CD8-positive, alpha-beta T cell (primary cell): ENCODE measurements at regions of chr6 and their contacts with region 1.

Region 1: DNA sequence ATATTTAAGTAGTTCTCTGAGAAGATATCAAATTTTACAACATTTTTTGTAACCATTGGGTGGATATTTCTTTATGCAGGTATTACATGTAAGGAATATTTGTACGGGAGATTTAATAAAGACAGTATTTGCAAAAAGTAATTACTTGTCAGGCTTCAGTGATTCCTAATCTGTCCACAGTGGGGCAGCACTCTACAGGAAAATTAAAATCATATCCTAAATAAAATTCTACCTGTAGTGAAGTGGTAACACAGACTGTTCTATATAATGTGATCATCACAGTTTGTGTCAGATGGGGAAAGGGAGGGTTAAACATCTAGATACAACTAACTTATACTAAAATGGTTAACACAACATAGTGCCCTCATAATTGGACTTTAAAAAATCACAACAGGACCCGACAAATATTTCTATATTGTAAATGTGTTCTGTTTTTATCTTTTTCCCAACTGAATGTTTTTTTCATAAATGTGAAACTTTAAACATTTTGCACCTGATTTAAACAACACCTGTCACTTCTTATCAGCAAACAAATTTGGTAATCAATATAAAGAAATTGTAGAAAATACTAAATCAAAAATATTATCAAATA is 145.6 kb upstream of the MANEA start:
- DNase-seq: peak in 6 of 9 experiments; percentile 4 to 41 (median 32)
- ATAC-seq: no peak
- H3K4me3 ChIP-seq: no peak overlapping the region
- H3K4me3 Mint-ChIP-seq: no peak overlapping the region
- H3K27ac ChIP-seq: no peak overlapping the region
- H3K27ac Mint-ChIP-seq: no peak overlapping the region
- H3K4me1 ChIP-seq: no peaks in the 10 kb centered on the region
- H3K4me1 Mint-ChIP-seq: no peaks in the 10 kb centered on the region
- H3K27me3 ChIP-seq: no peaks in the 10 kb centered on the region
- H3K27me3 Mint-ChIP-seq: no peaks in the 10 kb centered on the region
- CTCF ChIP-seq: peak; percentile 70

Region 2: DNA sequence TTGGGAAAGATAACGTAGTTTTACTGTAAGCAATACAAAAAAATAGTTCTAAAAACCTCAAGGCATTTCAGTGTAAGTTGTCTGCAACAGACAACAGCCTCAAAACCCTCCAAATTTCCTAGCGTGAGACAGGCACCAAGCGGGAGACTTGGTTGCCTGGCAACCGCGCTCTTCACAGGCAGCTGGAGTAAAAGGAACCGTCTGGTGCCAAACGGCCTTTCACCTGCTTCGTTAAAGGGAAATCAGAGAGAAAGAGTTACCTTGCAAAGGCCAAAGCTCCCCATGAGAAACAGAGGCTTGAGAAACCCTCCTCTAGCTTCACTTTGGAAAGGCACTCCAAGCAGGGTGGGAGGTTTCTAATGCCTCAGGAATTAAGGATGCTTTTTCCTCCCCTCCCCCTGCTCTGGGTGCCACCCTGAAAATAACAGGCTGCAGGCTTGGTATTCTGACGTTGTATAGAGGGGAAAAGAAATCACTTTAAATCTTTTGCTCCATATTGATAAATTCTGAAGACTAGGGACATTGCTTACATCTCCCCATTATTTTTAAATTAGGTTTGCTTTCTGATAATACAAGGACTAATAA is 960.1 kb after region 1 on chr6:
- CTCF ChIA-PET with region 1: no interaction called
- POLR2A ChIA-PET with region 1: no interaction called
- intact Hi-C with region 1: no loop called
- DNase-seq: peak in 2 of 9 experiments; percentile 12 to 27
- ATAC-seq: no peak
- H3K4me3 ChIP-seq: no peak overlapping the region
- H3K4me3 Mint-ChIP-seq: no peak overlapping the region
- H3K27ac ChIP-seq: no peak overlapping the region
- H3K27ac Mint-ChIP-seq: no peak overlapping the region
- H3K4me1 ChIP-seq: no peaks in the 10 kb centered on the region
- H3K4me1 Mint-ChIP-seq: peaks cover 4% of the 10 kb centered on the region
- H3K27me3 ChIP-seq: no peaks in the 10 kb centered on the region
- H3K27me3 Mint-ChIP-seq: peaks cover 7% of the 10 kb centered on the region
- CTCF ChIP-seq: no peak

Region 3: GRCh38 chr6:96468681-96469224 is 1037.0 kb after region 1 on chr6:
- CTCF ChIA-PET with region 1: no interaction called
- POLR2A ChIA-PET with region 1: no interaction called
- intact Hi-C with region 1: loop called (anchors 2 kb)
- DNase-seq: peak in 2 of 9 experiments; percentile 16 to 19
- ATAC-seq: no peak
- H3K4me3 ChIP-seq: no peak overlapping the region
- H3K4me3 Mint-ChIP-seq: no peak overlapping the region
- H3K27ac ChIP-seq: no peak overlapping the region
- H3K27ac Mint-ChIP-seq: no peak overlapping the region
- H3K4me1 ChIP-seq: peaks cover 5% of the 10 kb centered on the region
- H3K4me1 Mint-ChIP-seq: peaks cover 27% of the 10 kb centered on the region
- H3K27me3 ChIP-seq: no peaks in the 10 kb centered on the region
- H3K27me3 Mint-ChIP-seq: no peaks in the 10 kb centered on the region
- CTCF ChIP-seq: no peak